Activated CD4-positive, alpha-beta memory T cell treated with anti-CD3 and anti-CD28 coated beads, Interleukin-2, amount 10 ng/mL, durations not matched to agents 7 days and 5 days (primary cell): ENCODE measurements at regions of chr17 and their contacts with region 1.

Region 1: DNA sequence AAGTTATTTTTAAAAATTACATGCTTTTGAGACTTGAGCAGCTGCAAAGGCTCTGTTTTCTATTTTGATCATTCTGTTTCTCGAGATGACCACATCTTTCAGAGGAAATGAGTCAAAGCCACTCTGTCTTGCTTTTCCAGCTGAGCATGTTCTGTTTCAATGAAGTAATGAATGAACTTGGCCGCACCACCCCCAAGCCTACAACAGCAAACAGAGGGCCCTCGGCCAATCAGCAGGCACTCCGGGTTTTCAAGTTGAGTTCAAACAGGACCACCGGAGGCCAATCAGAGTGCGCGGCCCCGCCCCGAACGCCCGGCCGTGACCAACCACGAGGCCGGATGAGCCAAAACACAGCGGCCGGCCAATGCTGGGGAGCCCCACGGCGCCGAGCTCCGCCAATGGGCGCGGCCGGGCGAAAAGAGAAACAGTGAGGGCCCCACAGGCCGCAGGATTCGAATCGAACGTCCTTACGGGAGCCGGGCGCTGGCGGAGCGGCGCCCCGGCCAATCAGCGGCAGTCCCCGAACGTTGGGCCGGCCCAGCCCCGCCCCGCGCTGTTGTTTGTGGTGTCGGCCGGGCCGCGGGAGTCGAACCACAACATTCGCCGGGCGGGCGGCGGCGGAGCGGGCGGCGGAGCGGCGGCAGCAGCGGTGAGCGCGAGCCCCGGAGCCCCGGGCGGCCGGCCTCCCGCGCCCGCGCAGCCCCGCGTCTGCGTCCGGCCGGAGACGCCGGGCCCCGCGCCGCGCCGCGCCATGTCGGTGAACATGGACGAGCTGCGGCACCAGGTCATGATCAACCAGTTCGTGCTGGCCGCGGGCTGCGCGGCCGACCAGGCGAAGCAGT is at the start of gene UBALD2:
- DNase-seq: peak; percentile 100
- H3K4me3 Mint-ChIP-seq: peak within 1 kb of the TSS; percentile 96
- H3K27ac Mint-ChIP-seq: peak within 1 kb of the TSS; percentile 99
- H3K4me1 Mint-ChIP-seq: peaks cover 56% of the 10 kb centered on the region
- H3K27me3 Mint-ChIP-seq: no peaks in the 10 kb centered on the region
- total RNA-seq, gene UBALD2: 524 to 546 TPM

Region 2: DNA sequence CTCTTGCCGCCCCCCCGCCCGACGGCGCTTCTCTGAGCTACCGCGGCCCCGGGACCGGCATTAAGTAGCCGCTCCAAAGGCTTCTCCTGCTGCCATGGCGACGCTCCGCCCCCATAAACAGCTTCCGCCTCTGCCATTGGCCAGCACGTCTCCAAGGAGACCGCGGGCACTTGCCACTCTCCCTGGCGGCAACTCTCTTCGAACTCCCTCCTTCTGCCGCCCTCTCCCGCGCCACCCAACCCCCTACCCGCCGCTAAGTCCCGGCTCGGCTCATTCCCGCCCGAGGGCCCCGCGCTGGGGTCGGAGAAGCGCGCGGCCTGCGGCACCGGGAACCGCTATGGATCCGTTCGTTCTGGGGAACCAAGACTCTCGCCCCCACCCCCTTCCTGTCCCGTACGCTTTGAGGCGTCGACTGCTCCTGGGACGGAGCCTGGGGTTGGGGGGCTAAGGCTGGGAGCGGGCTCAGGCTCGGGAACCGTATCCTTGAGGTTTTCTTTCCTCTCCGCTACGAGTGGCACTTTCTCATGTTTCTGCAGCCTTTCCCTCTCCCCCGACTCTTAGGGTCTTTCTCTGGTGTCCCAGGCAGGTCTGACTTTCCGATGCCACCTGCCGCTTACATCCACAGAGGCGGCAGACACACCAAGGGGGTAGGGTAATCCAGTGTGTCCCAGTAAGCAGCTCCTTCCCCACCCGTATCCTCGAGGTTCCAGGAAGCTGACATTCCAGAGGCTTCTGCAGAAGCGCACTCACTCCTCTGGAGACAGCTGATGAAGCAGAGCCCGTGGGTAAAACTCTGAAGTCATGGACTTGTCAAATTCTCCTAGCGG is 123.6 kb before region 1 on chr17 and contains the start of gene FOXJ1:
- CTCF ChIA-PET with region 1: interaction called, 3 read pairs
- POLR2A ChIA-PET with region 1: interaction called, 173 read pairs
- DNase-seq: peak; percentile 94
- H3K4me3 Mint-ChIP-seq: peak within 1 kb of the TSS; percentile 71
- H3K27ac Mint-ChIP-seq: peak within 1 kb of the TSS; percentile 91
- H3K4me1 Mint-ChIP-seq: peaks cover 60% of the 10 kb centered on the region
- H3K27me3 Mint-ChIP-seq: peaks cover 14% of the 10 kb centered on the region
- total RNA-seq, gene FOXJ1: 0.13 to 0.15 TPM

Region 3: GRCh38 chr17:76182016-76182764 is 82.8 kb before region 1 on chr17:
- CTCF ChIA-PET with region 1: interaction called, 22 read pairs
- POLR2A ChIA-PET with region 1: interaction called, 1,244 read pairs
- DNase-seq: peak; percentile 96
- H3K4me3 Mint-ChIP-seq: peak overlapping the region; percentile 47
- H3K27ac Mint-ChIP-seq: peak overlapping the region; percentile 95
- H3K4me1 Mint-ChIP-seq: peaks cover 61% of the 10 kb centered on the region
- H3K27me3 Mint-ChIP-seq: no peaks in the 10 kb centered on the region

Region 4: DNA sequence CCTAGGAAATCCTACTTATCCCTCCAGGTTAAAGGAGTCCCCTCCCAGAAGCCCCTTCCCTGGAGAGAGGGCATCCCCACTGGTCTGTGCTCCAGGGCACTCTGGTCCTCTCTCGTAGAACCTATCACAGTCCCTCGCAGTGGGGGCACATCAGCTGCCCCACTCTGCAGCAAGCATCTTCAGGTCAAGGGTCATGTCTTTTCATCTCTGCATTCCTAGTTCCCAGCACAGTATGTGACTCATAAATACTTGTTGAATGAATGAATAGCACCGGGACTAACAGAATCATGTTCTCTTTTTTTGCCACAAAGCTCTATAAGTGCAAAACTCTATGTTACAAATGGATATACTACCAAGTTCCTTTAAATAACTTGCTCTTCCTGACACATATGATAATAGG is 60.7 kb before region 1 on chr17:
- CTCF ChIA-PET with region 1: interaction called, 4 read pairs
- POLR2A ChIA-PET with region 1: interaction called, 398 read pairs
- DNase-seq: no peak
- H3K4me3 Mint-ChIP-seq: no peak overlapping the region
- H3K27ac Mint-ChIP-seq: no peak overlapping the region
- H3K4me1 Mint-ChIP-seq: peaks cover 68% of the 10 kb centered on the region
- H3K27me3 Mint-ChIP-seq: no peaks in the 10 kb centered on the region

Region 5: DNA sequence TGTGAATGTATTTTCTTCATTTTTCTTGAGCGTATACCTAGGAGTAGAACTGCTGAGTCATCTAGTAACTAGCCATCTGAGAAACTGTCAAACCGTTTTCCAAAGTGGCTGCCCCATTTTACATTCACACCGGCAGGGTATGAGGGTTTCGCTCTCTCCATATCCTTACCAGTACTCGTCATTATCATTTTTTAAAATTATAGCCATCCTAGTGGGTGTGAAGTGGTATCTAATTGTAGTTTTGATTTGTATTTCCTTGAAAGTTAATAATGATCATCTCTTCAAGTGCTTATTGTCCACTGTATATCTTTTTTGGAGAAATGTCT is 30.7 kb before region 1 on chr17:
- CTCF ChIA-PET with region 1: interaction called, 6 read pairs
- POLR2A ChIA-PET with region 1: interaction called, 147 read pairs
- DNase-seq: no peak
- H3K4me3 Mint-ChIP-seq: peak overlapping the region; percentile 11
- H3K27ac Mint-ChIP-seq: peak overlapping the region; percentile 9
- H3K4me1 Mint-ChIP-seq: peaks cover 59% of the 10 kb centered on the region
- H3K27me3 Mint-ChIP-seq: no peaks in the 10 kb centered on the region

Region 6: GRCh38 chr17:76246080-76247066 is 18.6 kb before region 1 on chr17:
- CTCF ChIA-PET with region 1: interaction called, 56 read pairs
- POLR2A ChIA-PET with region 1: interaction called, 1,335 read pairs
- DNase-seq: peak; percentile 87
- H3K4me3 Mint-ChIP-seq: peak overlapping the region; percentile 32
- H3K27ac Mint-ChIP-seq: peak overlapping the region; percentile 94
- H3K4me1 Mint-ChIP-seq: peaks cover 82% of the 10 kb centered on the region
- H3K27me3 Mint-ChIP-seq: peaks cover 5% of the 10 kb centered on the region